Left ventricle myocardium inferior (tissue), 1 donor: ENCODE measurements at regions of chr18 and their contacts with region 1.

Region 1: GRCh38 chr18:44679056-44679905 is 1.4 kb upstream of the SETBP1 start:
- DNase-seq: peak; percentile 87
- H3K4me3 ChIP-seq: peak overlapping the region; percentile 91
- H3K27ac ChIP-seq: peak overlapping the region; percentile 98
- H3K4me1 ChIP-seq: peaks cover 41% of the 10 kb centered on the region
- H3K27me3 ChIP-seq: no peaks in the 10 kb centered on the region
- CTCF ChIP-seq: peak; percentile 72

Region 2: GRCh38 chr18:44609181-44609941 is 69.9 kb before region 1 on chr18:
- intact Hi-C with region 1: no loop called
- DNase-seq: no peak
- H3K4me3 ChIP-seq: no peak overlapping the region
- H3K27ac ChIP-seq: no peak overlapping the region
- H3K4me1 ChIP-seq: no peaks in the 10 kb centered on the region
- H3K27me3 ChIP-seq: no peaks in the 10 kb centered on the region
- CTCF ChIP-seq: no peak

Region 3: GRCh38 chr18:44895176-44895798 is 216.0 kb after region 1 on chr18:
- intact Hi-C with region 1: loop called (anchors 5 kb)
- DNase-seq: peak; percentile 28
- H3K4me3 ChIP-seq: no peak overlapping the region
- H3K27ac ChIP-seq: no peak overlapping the region
- H3K4me1 ChIP-seq: peaks cover 23% of the 10 kb centered on the region
- H3K27me3 ChIP-seq: peaks cover 43% of the 10 kb centered on the region
- CTCF ChIP-seq: peak; percentile 69

Region 4: DNA sequence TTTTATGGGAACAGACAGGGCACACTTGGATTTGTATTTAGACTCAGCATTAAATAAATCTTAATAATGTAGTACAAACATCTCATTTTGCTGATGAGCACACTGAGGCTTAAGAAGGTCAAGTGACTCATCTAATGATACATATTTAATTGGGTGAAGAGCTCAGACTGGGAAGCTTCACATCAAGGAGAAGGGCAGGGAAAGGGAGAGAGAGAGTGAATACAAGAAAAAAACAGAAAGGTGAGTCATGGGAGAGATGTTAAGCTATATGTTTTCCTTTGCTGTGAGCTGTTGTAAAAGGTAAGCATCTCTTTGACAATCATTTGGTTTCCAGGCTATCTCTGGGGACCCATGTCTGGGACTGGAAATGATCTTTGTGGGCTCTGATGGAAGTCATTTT is 279.2 kb after region 1 on chr18:
- intact Hi-C with region 1: loop called (anchors 10 kb)
- DNase-seq: no peak
- H3K4me3 ChIP-seq: no peak overlapping the region
- H3K27ac ChIP-seq: no peak overlapping the region
- H3K4me1 ChIP-seq: peaks cover 29% of the 10 kb centered on the region
- H3K27me3 ChIP-seq: no peaks in the 10 kb centered on the region
- CTCF ChIP-seq: no peak